Posterior cingulate gyrus (tissue), 11 donors: ENCODE measurements at regions of chrX and their contacts with region 1.

Region 1: GRCh38 chrX:48957827-48958634 is 624 bp upstream of the OTUD5 start:
- DNase-seq: peak; percentile 92 to 100 (median 94)

Region 2: DNA sequence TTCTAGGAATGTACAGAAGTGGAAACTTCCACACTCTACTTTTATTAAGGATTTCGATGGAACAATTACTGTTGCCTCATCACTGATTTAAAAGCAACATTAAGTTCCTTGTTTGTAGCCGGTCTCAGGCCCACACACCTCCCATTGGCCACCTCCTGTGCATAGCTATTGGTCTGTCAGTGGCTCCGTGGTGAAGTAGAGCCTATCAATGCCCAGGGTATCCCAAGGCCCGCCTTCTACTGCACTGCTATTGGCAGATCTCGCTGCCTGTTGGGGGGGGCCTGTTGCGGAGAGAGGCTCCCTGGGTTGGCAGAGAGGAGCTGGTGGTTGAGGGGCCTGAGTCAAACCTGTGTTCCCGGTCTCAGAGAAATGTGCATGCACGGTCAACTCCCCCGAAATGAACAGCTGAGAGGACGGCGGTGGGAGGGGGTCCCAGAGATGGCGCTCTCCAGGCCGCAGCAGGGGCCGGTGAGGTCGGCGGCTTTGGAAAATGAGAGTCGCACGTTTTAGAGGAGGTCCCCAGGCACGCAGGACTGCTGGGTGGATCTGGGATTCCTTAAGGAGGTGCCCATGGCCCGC is 1401.9 kb before region 1 on chrX:
- intact Hi-C with region 1: no loop called
- DNase-seq: peak; percentile 80 to 99 (median 88)

Region 3: DNA sequence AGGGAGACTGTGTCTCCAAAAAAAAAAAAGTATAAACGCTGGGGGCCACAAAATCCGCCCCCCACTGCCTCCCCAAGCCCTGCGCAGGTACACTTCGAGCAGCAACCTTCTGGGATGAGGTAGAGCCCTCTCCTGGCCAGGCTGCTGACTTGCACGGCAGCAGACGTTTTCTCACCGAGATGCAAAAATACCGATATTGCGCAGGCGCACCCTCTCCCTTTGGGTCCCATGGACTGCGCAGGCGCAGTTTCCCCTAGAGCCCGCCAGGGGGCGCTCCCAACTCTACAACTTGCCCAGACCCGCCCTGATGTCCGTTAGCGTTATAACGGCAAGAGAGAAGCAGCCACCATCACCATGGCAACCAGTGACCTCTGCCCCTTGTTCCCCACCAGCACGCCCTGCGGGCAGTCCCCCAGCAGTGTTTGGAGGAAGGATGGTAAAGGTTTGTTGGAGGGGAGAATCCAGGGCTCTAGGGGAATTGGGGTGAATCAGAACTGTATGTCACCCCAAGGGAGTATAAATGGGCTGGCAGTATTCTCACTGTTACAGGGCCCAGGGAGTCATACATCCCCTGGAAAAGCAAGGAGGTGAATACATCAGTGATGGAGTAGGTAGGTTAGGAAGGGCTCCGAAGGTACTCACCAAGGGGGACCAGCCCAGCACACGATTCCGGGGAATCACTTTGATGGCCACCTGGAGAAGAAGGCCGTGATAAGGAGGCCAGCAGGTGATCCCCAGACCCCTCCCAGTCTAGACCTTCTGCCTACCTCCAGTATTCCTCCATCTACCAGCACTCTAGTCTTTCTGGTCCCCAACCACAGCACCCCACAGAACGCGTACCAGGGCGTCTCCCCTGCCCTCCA is 40.7 kb before region 1 on chrX:
- intact Hi-C with region 1: loop called (anchors 5 kb)
- DNase-seq: peak; percentile 67 to 97 (median 78)

Region 4: DNA sequence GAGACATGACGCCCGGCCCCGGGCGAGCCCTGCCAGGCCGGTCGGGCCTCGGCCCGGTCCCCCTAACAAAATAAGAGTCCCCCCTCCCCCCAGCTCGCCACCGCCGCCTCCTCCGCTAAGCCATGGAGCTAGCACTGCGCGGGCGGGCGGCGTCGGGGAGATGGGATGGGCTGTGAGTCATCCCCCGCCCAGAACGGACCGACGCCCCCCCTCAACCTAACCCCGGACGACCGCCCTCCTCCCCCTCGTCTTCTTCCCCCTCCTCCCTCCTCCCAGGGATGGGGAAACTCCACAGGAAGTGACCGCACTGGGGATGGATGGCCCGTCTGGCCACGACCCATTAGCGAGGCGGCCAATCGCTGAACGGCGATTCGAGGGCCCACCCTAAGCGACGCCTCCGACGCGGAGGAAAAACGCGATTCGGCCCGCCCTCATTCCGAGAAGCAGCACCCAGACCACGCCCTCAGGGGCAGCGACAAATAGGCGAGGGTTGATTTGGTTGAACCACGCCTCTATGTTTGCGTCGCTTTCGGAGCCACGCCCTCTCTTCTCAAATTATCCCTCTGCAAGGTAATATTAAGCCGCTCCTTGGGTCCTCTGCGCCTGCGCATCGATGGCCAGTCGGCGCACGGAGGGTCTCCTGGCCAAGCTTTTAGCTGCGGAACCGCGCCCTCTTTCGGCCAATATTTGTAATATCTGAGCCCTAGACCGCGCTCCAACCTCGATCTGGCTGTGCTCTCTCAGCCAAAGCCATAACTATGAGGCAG is 85.4 kb after region 1 on chrX and contains the start of gene TFE3:
- intact Hi-C with region 1: loop called (anchors 5 kb)
- DNase-seq: peak; percentile 91 to 99 (median 94)

Region 5: DNA sequence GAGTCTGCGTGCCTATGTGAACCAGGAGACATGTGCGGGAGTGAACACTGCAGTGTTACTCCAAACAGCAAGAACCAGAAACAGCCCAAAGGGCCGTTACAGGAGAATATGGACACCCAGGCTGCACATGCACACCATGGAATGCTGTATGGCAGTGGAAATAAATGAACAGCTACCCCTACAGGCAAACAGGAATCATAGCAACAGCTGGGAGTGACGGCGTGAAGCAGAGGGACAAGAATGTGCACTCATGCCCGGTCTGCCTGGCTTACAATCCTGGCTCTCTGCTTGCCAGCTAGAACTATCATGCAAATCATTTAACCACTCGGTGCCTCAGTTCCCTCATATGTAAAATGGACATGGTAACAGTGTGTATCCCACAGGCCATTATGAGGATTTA is 148.9 kb after region 1 on chrX:
- intact Hi-C with region 1: loop called (anchors 5 kb)
- DNase-seq: peak in 6 of 10 donors; percentile 9 to 91 (median 41)